Activated CD8-positive, alpha-beta T cell treated with anti-CD3 and anti-CD28 coated beads for 36 hours (primary cell): ENCODE measurements at regions of chr2 and their contacts with region 1.

Region 1: GRCh38 chr2:38653715-38654527 is 12.0 kb upstream of the GALM start:
- DNase-seq: peak; percentile 93
- ATAC-seq: peak; percentile 83
- H3K4me3 Mint-ChIP-seq: peak overlapping the region; percentile 52
- H3K27ac Mint-ChIP-seq: peak overlapping the region; percentile 88
- H3K4me1 Mint-ChIP-seq: peaks cover 49% of the 10 kb centered on the region
- H3K27me3 Mint-ChIP-seq: no peaks in the 10 kb centered on the region
- CTCF ChIP-seq: no peak

Region 2: DNA sequence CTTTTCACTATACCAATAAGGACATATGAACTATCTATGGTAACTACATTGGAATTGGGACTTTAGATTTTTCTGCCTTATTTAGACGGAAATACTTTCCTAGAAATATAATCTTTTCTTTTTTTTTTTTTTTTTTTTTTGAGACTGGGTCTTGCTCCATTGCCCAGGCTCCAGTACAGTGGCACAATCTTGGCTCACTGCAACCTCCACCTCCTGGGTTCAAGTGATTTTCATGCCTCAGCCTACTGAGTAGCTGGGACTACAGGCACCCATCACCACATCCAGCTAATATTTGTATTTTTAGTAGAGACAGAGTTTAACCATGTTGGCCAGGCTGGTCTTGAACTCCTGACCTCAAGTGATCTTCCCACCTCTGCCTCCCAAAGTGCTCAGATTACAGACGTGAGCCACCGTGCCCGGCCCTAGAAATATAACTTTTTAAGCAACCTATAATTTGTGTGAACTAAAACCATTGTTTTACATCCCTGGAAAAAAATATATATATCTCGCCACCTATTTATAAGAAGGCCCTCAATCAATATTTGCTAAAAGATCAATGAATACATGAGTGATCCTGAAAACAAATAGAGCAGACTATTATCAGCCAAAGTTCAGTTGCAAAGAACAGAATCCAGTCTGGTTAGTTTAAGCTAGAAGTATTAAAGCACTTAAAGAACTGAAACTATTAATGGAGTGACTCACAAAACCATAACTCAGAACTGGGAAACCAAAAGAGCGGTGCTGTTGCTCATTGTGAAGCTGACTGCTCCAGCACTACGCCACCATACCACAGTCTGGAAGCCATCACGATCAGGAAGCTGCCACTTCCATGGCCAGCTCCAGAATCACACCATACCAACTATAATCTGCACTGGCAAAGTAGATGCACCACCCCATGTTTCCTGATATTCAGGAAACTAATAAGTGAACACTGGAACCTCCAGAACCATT is 42.8 kb before region 1 on chr2:
- CTCF ChIA-PET with region 1: interaction called, 14 read pairs
- POLR2A ChIA-PET with region 1: interaction called, 3 read pairs
- intact Hi-C with region 1: no loop called
- DNase-seq: peak; percentile 51
- ATAC-seq: peak; percentile 82
- H3K4me3 Mint-ChIP-seq: no peak overlapping the region
- H3K27ac Mint-ChIP-seq: peak overlapping the region; percentile 46
- H3K4me1 Mint-ChIP-seq: peaks cover 58% of the 10 kb centered on the region
- H3K27me3 Mint-ChIP-seq: no peaks in the 10 kb centered on the region
- CTCF ChIP-seq: no peak

Region 3: GRCh38 chr2:38720613-38721241 is 66.8 kb after region 1 on chr2:
- CTCF ChIA-PET with region 1: interaction called, 13 read pairs
- POLR2A ChIA-PET with region 1: interaction called, 8 read pairs
- intact Hi-C with region 1: loop called (anchors 5 kb)
- DNase-seq: peak; percentile 42
- ATAC-seq: no peak
- H3K4me3 Mint-ChIP-seq: peak overlapping the region; percentile 39
- H3K27ac Mint-ChIP-seq: peak overlapping the region; percentile 92
- H3K4me1 Mint-ChIP-seq: peaks cover 62% of the 10 kb centered on the region
- H3K27me3 Mint-ChIP-seq: no peaks in the 10 kb centered on the region
- CTCF ChIP-seq: no peak

Region 4: DNA sequence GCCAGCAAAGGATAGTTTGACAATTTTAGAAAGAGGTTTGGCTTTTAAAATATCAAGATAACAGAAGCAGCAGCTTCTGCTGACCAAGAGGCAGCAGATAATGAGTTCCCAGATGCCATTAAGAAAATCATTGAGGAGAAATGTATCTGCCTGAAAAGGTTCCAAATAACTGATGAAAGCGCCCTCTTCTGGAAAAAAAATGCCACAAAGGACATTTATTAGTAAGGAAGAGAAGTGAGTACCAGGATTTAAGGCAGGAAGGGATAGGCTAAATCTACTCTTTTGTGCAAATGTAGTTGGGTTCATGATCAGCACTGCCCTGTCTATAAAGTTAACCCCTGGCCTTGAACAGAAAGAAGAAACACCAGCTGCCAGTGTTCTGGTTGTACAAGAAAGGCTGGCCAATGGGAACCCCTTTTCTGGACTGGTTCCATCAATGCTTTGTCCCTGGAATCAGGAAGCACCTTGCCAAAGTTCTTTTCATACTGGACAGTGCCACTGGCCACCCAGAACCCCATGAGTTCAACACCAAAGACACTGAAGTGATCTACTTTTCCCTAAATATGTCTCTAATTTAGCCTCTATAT is 181.2 kb after region 1 on chr2:
- CTCF ChIA-PET with region 1: no interaction called
- POLR2A ChIA-PET with region 1: no interaction called
- intact Hi-C with region 1: no loop called
- DNase-seq: no peak
- ATAC-seq: no peak
- H3K4me3 Mint-ChIP-seq: no peak overlapping the region
- H3K27ac Mint-ChIP-seq: no peak overlapping the region
- H3K4me1 Mint-ChIP-seq: no peaks in the 10 kb centered on the region
- H3K27me3 Mint-ChIP-seq: no peaks in the 10 kb centered on the region
- CTCF ChIP-seq: peak; percentile 57